ENCODE measurements at regions of chr14 and their contacts with region 1.

Region 1: GRCh38 chr14:23120541-23121251 is 1.6 kb upstream of the CEBPE start:
- DNase-seq: peak; percentile 95
- H3K4me3 ChIP-seq: peak overlapping the region in 1 of 8 donors; percentile 36
- H3K27ac ChIP-seq: peak overlapping the region; percentile 70 to 89 (median 78)
- H3K4me1 ChIP-seq: peaks cover 16 to 70% (median 44%) of the 10 kb centered on the region in 6 donors
- H3K27me3 ChIP-seq: no peaks in the 10 kb centered on the region
- CTCF ChIP-seq: peak; percentile 97 to 100 (median 99)
- POLR2A ChIP-seq: no peak

Region 2: DNA sequence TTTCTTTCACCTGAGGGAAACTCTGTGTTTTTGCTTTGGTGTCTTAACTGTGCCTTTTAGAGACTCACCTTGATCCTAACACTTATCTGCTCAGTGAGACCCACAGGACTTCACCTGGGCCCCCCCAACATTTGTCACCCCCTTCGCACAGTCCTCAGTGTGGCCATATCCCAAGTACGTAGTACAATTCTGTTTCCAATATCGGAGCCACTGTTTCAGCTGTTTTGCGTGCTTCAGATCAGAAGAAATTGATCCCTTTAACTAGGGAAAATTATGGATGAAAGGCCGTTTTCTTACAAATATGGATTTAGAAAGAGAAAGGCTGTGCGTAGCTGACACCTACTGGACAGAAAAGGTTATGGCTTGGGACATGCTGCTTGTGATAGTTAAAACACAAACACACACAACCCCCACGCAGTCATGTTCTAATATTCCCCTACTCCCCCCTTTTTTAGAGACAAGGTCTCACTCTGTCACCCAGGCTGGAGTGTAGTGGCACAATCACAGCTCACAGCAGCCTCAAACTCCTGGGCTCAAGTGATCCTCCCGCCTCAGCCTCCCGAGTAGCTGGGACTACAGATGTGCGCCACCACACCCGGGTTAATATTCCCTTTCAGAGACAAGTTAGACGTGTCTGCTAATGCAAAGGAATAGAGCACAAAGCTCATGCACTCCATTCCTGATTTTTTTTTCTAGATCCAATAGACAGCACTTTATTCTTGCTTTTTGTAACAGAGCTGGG is 66.4 kb after region 1 on chr14:
- intact Hi-C with region 1: loop called (anchors 2 kb)
- DNase-seq: no peak
- H3K4me3 ChIP-seq: no peak overlapping the region
- H3K27ac ChIP-seq: no peak overlapping the region
- H3K4me1 ChIP-seq: peaks cover 4 to 28% (median 16%) of the 10 kb centered on the region in 6 donors
- H3K27me3 ChIP-seq: peaks cover 0 to 8% (median 0%) of the 10 kb centered on the region in 7 donors
- CTCF ChIP-seq: peak; percentile 64 to 87 (median 78)
- POLR2A ChIP-seq: no peak

Region 3: GRCh38 chr14:23294734-23295561 is 174.3 kb after region 1 on chr14:
- intact Hi-C with region 1: loop called (anchors 10 kb)
- DNase-seq: no peak
- H3K4me3 ChIP-seq: peak overlapping the region in 1 of 8 donors; percentile 39
- H3K27ac ChIP-seq: peak overlapping the region in 2 of 8 donors; percentile 6 to 31
- H3K4me1 ChIP-seq: peaks cover 5 to 37% (median 26%) of the 10 kb centered on the region in 6 donors
- H3K27me3 ChIP-seq: no peaks in the 10 kb centered on the region
- CTCF ChIP-seq: peak; percentile 74 to 94 (median 83)
- POLR2A ChIP-seq: no peak